B cell (primary cell): ENCODE measurements at regions of chr16 and their contacts with region 1.

Region 1: GRCh38 chr16:11312718-11313492 is 31.8 kb upstream of the PRM1 start:
- DNase-seq: peak; percentile 37
- ATAC-seq: no peak
- H3K4me3 ChIP-seq: no peak overlapping the region
- H3K4me3 Mint-ChIP-seq: peak overlapping the region; percentile 48
- H3K27ac ChIP-seq: no peak overlapping the region
- H3K27ac Mint-ChIP-seq: peak overlapping the region; percentile 82
- H3K4me1 ChIP-seq: peaks cover 59 to 73% of the 10 kb centered on the region in 2 donors
- H3K4me1 Mint-ChIP-seq: peaks cover 71% of the 10 kb centered on the region
- H3K27me3 ChIP-seq: no peaks in the 10 kb centered on the region
- H3K27me3 Mint-ChIP-seq: no peaks in the 10 kb centered on the region
- CTCF ChIP-seq: no peak

Region 2: DNA sequence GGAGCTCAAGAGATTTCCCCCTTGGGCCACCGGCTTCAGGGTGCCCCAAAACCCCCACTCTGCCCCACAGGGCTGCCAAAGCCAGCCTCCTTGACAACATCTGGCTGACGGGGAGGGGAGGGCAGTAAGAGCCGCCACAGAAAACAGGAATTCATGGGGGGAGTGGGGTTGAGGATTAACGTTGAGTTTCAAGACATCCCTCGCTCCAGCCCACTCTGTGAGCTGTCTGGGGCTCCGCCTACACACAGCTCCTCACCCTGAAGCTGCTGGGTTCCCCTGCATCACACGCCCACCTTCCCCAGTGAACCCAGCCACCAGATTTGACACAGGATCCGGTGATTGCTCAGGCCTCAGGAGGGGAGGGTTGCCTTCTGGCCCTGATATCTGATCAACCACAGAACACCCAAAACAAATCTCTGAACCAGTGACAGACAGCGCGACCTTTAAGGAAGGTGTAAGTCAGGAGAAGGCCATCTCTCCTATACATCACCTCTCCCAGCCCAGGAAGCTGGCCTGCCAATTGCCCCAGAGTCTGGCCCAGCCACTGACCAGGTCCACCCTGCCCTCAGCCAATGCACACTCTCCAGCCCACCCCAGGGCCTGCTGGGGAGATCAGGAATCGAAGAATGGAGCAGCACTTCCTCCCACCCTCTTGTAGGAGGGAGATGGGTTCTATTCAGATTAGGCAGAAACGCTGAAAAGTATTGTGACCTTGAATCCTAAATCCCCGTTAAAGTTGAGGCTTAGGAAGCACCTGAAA is 236.5 kb before region 1 on chr16:
- CTCF ChIA-PET with region 1: no interaction called
- POLR2A ChIA-PET with region 1: no interaction called
- intact Hi-C with region 1: loop called (anchors 5 kb)
- DNase-seq: peak; percentile 44
- ATAC-seq: peak; percentile 70
- H3K4me3 ChIP-seq: no peak overlapping the region
- H3K4me3 Mint-ChIP-seq: peak overlapping the region; percentile 81
- H3K27ac ChIP-seq: peak overlapping the region; percentile 63 to 64
- H3K27ac Mint-ChIP-seq: peak overlapping the region; percentile 97
- H3K4me1 ChIP-seq: peaks cover 53 to 57% of the 10 kb centered on the region in 2 donors
- H3K4me1 Mint-ChIP-seq: peaks cover 77% of the 10 kb centered on the region
- H3K27me3 ChIP-seq: no peaks in the 10 kb centered on the region
- H3K27me3 Mint-ChIP-seq: no peaks in the 10 kb centered on the region
- CTCF ChIP-seq: no peak

Region 3: GRCh38 chr16:11232852-11233726 is 79.8 kb before region 1 on chr16:
- CTCF ChIA-PET with region 1: no interaction called
- POLR2A ChIA-PET with region 1: no interaction called
- intact Hi-C with region 1: no loop called
- DNase-seq: peak; percentile 76
- ATAC-seq: peak; percentile 73
- H3K4me3 ChIP-seq: peak overlapping the region in 4 of 5 experiments; percentile 17 to 56 (median 42)
- H3K4me3 Mint-ChIP-seq: peak overlapping the region; percentile 71
- H3K27ac ChIP-seq: peak overlapping the region in 1 of 2 donors; percentile 37
- H3K27ac Mint-ChIP-seq: peak overlapping the region; percentile 68
- H3K4me1 ChIP-seq: peaks cover 16 to 19% of the 10 kb centered on the region in 2 donors
- H3K4me1 Mint-ChIP-seq: peaks cover 34% of the 10 kb centered on the region
- H3K27me3 ChIP-seq: no peaks in the 10 kb centered on the region
- H3K27me3 Mint-ChIP-seq: no peaks in the 10 kb centered on the region
- CTCF ChIP-seq: no peak

Region 4: DNA sequence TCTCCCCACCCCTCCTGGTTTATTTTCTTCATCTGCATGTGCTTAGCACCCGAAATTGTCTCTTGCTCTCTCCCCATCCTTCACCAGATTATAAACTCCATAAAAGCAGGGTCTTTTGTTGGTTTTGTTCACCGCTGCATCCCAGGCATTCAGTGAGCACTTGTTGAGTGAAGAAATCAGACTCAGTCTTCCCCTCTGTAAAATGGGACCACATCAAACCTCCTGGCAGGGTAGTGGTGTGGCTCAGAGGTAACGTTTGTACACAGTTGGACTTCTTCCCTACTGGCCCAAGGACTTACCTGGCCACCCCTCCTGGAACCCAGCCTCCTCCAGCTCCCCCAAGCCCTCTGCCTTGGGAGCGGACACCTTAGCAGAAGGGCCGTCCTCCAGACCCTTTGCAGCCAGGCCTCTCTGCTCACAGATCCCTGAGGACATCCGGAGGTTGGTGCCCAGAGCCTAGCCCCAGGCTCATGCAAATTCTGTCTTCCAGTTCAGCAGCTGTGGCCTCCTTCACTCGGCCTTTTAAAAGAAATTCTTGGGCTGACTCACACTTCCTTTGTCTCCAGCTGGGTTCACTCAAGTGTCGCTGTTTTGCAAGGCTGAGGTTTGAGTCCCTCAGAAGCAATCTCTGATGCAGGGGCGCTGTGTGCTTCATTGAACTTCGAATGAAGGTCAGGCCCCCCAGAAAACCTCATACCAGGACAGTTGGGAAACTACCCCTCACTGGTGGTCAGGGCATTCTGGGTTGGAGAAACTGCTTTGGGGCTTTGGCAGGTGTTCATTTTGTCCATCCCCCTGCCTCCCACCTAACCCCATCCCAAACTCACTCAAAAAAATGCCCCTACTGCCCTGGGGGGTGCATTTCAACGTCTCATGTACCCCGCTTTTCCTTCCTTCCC is 15.5 kb after region 1 on chr16:
- CTCF ChIA-PET with region 1: interaction called, 31 read pairs
- POLR2A ChIA-PET with region 1: interaction called, 94 read pairs
- intact Hi-C with region 1: loop called (anchors 1 kb)
- DNase-seq: peak; percentile 90
- ATAC-seq: peak; percentile 70
- H3K4me3 ChIP-seq: peak overlapping the region in 4 of 5 experiments; percentile 30 to 64 (median 36)
- H3K4me3 Mint-ChIP-seq: peak overlapping the region; percentile 81
- H3K27ac ChIP-seq: peak overlapping the region; percentile 91 to 94
- H3K27ac Mint-ChIP-seq: peak overlapping the region; percentile 93
- H3K4me1 ChIP-seq: peaks cover 59 to 69% of the 10 kb centered on the region in 2 donors
- H3K4me1 Mint-ChIP-seq: peaks cover 62% of the 10 kb centered on the region
- H3K27me3 ChIP-seq: no peaks in the 10 kb centered on the region
- H3K27me3 Mint-ChIP-seq: no peaks in the 10 kb centered on the region
- CTCF ChIP-seq: no peak

Region 5: GRCh38 chr16:11339075-11339474 is 26.2 kb after region 1 on chr16:
- CTCF ChIA-PET with region 1: no interaction called
- POLR2A ChIA-PET with region 1: interaction called, 10 read pairs
- intact Hi-C with region 1: loop called (anchors 2 kb)
- DNase-seq: no peak
- ATAC-seq: no peak
- H3K4me3 ChIP-seq: no peak overlapping the region
- H3K4me3 Mint-ChIP-seq: no peak overlapping the region
- H3K27ac ChIP-seq: no peak overlapping the region
- H3K27ac Mint-ChIP-seq: no peak overlapping the region
- H3K4me1 ChIP-seq: no peaks in the 10 kb centered on the region
- H3K4me1 Mint-ChIP-seq: peaks cover 5% of the 10 kb centered on the region
- H3K27me3 ChIP-seq: no peaks in the 10 kb centered on the region
- H3K27me3 Mint-ChIP-seq: no peaks in the 10 kb centered on the region
- CTCF ChIP-seq: no peak

Region 6: GRCh38 chr16:11345040-11345862 is 32.3 kb after region 1 on chr16 and contains the start of gene RMI2:
- CTCF ChIA-PET with region 1: interaction called, 5 read pairs
- POLR2A ChIA-PET with region 1: interaction called, 10 read pairs
- intact Hi-C with region 1: loop called (anchors 2 kb)
- DNase-seq: peak; percentile 97
- ATAC-seq: peak; percentile 100
- H3K4me3 ChIP-seq: peak within 1 kb of the TSS; percentile 61 to 76 (median 70)
- H3K4me3 Mint-ChIP-seq: peak within 1 kb of the TSS; percentile 90
- H3K27ac ChIP-seq: peak within 1 kb of the TSS in 1 of 2 donors; percentile 26
- H3K27ac Mint-ChIP-seq: peak within 1 kb of the TSS; percentile 78
- H3K4me1 ChIP-seq: peaks cover 8 to 25% of the 10 kb centered on the region in 2 donors
- H3K4me1 Mint-ChIP-seq: peaks cover 39% of the 10 kb centered on the region
- H3K27me3 ChIP-seq: no peaks in the 10 kb centered on the region
- H3K27me3 Mint-ChIP-seq: no peaks in the 10 kb centered on the region
- CTCF ChIP-seq: no peak
- total RNA-seq, gene RMI2: 25.5 and 27.0 TPM in 2 replicates

Region 7: DNA sequence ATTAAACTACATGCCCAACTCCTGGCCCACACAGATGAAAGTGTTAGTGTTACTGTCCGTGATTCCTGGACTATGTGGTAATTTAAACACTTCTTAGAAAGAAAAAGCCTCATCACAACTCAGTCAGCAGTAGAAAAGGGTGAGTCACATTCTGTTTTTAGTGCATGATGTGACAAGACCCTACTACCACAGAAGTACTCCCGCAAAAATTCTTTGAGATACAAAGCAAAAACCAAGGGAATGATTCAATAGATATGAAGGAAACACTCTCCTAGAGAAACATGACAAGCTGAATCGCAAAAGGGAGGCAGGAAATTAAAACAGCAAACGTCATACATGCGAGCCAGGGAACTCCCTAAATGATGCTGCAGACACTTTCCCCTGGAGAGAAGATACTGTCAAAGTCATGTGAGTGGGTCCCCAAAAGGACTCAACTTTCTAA is 369.8 kb after region 1 on chr16:
- CTCF ChIA-PET with region 1: no interaction called
- POLR2A ChIA-PET with region 1: no interaction called
- intact Hi-C with region 1: loop called (anchors 5 kb)
- DNase-seq: peak; percentile 85
- ATAC-seq: peak; percentile 5
- H3K4me3 ChIP-seq: peak overlapping the region in 2 of 5 experiments; percentile 0 to 35
- H3K4me3 Mint-ChIP-seq: peak overlapping the region; percentile 78
- H3K27ac ChIP-seq: peak overlapping the region; percentile 95 to 99
- H3K27ac Mint-ChIP-seq: peak overlapping the region; percentile 91
- H3K4me1 ChIP-seq: peaks cover 96 to 97% of the 10 kb centered on the region in 2 donors
- H3K4me1 Mint-ChIP-seq: peaks cover 96% of the 10 kb centered on the region
- H3K27me3 ChIP-seq: no peaks in the 10 kb centered on the region
- H3K27me3 Mint-ChIP-seq: no peaks in the 10 kb centered on the region
- CTCF ChIP-seq: no peak